ENCODE measurements at regions of chr9 and their contacts with region 1.

Region 1: DNA sequence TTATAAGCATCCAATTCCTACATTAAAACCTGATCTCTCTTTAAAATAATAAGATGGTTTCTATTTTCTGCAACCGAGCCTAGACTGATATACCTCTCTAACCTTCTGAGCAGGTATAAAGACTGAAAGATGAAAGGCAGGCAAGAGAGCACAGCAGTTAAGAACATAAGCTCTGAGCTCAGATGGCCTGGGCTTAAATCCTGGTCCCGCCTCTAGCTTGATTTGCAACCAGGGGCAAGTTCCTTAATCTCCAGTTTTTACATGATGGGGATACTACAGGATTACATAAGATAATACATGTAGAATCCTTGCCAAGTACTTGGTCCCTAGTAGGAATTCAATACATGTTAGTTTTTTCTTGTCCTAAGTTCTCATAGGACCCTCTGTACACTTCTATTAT is 33.9 kb downstream of the SLC24A2 start:
- DNase-seq: no peak
- ATAC-seq: no peak
- H3K4me3 Mint-ChIP-seq: no peak overlapping the region
- H3K27ac Mint-ChIP-seq: no peak overlapping the region
- H3K4me1 Mint-ChIP-seq: no peaks in the 10 kb centered on the region
- H3K27me3 Mint-ChIP-seq: peaks cover 4% of the 10 kb centered on the region

Region 2: DNA sequence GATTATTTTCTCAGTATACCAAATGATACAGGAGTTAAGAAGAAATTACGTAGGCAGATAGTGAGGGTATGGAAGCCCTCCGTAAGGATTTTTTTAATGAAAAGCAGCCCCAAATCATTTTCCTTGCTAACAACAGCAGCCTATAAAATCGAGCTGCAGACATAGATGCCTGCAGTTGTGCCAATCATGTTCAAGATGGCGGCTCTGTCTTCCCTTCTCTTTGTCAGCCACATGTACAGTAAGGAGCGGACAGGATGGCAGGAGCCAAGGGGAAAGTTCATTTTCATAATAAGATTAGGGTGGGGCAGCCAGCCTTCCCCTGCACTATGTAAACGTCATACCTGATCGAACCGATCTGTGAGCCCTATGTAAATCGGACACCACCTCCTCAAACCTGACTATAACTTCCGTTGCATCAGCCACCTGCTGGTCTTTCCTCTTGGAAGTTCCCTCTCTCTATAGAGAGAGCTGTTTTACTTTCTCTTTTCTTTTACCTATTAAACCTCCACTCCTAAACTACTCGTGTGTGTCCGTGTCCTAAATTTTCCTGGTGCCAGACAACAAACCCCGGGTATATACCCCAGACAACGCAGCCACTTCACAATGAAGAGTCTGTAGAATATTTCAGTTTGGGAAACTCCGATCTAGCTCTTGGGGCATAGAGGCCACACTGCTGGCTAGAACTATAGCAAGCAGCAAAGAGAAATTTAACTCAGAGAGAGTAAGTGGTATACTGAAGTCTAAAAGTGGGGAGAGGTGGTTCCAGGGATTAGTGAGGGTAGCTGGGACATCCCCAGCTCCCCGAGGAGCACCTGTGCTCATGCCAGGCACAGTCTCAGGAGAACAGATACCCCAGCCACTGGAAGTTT is 54.7 kb after region 1 on chr9:
- CTCF ChIA-PET with region 1: no interaction called
- POLR2A ChIA-PET with region 1: no interaction called
- intact Hi-C with region 1: loop called in 1 of 2 experiments (anchors 5 kb)
- DNase-seq: no peak
- ATAC-seq: no peak
- H3K4me3 Mint-ChIP-seq: no peak overlapping the region
- H3K27ac Mint-ChIP-seq: no peak overlapping the region
- H3K4me1 Mint-ChIP-seq: no peaks in the 10 kb centered on the region
- H3K27me3 Mint-ChIP-seq: peaks cover 12% of the 10 kb centered on the region

Region 3: DNA sequence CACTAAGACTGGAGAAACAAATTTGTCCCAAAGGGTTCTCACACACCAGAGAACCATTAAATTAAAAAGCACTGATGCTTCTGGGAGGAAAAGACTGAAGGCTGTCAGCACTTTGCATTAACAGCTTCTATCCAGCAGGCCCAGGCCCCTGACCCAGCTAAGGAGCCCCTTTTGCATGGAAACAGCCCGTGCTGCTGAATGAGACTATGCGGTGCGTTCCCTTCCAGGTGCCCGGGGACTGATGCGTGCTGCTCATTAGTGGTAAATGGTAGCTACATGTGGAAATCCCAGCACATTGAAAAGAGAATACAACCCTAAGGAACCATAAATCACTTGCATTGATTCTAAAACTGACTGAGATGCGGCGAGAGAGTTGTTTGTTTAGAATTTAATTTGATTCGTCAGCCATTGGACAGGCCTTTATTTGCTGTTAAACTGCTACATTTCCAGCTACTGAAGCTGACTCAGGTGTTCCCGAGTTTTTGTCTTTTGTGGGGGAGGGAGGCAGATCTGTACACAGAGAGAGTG is 384.9 kb after region 1 on chr9:
- CTCF ChIA-PET with region 1: no interaction called
- POLR2A ChIA-PET with region 1: no interaction called
- intact Hi-C with region 1: no loop called
- DNase-seq: no peak
- ATAC-seq: no peak
- H3K4me3 Mint-ChIP-seq: no peak overlapping the region
- H3K27ac Mint-ChIP-seq: no peak overlapping the region
- H3K4me1 Mint-ChIP-seq: peaks cover 2% of the 10 kb centered on the region
- H3K27me3 Mint-ChIP-seq: peaks cover 5% of the 10 kb centered on the region